AG04449 (cell line): ENCODE measurements at regions of chr3 and their contacts with region 1.

Region 1: GRCh38 chr3:10344147-10344943 is 23.4 kb upstream of the SEC13 start:
- DNase-seq: no peak
- H3K4me3 ChIP-seq: no peak overlapping the region
- CTCF ChIP-seq: peak; percentile 92

Region 2: GRCh38 chr3:10185804-10186762 is 158.3 kb before region 1 on chr3:
- CTCF ChIA-PET with region 1: no interaction called
- POLR2A ChIA-PET with region 1: no interaction called
- DNase-seq: no peak
- H3K4me3 ChIP-seq: no peak overlapping the region
- CTCF ChIP-seq: no peak

Region 3: DNA sequence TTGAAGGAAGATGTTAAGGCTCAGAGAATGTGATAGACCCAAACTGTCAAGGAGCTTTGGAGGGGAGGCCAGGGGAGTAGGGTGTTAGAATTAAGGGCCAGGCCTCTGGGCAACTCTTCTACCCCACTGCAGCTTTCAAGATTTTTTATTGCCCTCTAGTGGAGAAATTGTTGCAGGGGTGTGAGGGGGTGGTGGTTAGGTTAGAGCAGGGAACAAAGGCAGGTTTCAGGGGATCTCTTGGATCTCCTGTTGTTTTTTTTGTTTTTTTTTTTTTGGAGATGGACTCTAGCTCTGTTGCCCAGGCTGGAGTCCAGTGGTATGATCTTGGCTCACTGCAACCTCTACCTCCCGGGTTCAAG is 22.0 kb before region 1 on chr3:
- CTCF ChIA-PET with region 1: interaction called, 15 read pairs
- POLR2A ChIA-PET with region 1: no interaction called
- DNase-seq: no peak
- H3K4me3 ChIP-seq: no peak overlapping the region
- CTCF ChIP-seq: no peak

Region 4: DNA sequence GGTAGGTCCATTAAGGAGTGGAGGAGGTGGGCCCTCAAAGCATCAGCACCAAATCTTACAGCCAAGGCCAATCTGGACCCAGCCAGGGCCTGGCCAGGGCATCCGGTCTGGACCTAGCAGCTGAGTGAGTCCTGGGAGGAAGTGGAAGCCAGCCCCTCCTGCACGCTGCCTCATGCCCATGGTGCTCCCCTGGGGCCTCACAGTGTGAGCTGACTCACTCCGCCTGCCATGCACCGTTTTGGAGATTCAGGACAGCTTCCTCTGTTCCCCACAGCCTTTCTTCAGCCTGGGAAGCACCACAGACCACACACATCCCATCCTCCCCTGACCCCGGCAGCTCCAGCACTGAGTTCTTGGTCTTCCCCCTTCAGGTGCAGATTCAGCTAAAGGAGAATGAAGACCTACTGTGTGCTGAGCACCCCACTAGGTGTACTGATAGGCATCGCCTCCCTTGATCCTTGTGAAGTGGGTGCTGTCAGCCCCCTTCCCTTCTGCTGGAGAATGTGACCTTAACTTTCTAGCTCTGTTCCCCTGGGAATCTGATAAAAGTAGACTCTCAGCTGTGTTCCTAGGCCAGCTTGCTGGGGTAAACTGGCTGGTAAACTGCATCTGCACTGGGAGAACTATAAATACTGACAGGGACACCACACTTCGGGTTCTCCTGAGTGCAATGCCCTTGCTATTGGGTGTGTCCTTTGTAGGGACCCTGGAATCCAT is 13.4 kb after region 1 on chr3:
- CTCF ChIA-PET with region 1: interaction called, 107 read pairs
- POLR2A ChIA-PET with region 1: interaction called, 3 read pairs
- DNase-seq: peak; percentile 88
- H3K4me3 ChIP-seq: no peak overlapping the region
- CTCF ChIP-seq: no peak